Right ventricle myocardium superior (tissue), 1 donor: ENCODE measurements at regions of chr11 and their contacts with region 1.

Region 1: GRCh38 chr11:45964911-45965389 is 42.5 kb downstream of the LARGE2 start:
- DNase-seq: no peak
- ATAC-seq: peak; percentile 88

Region 2: DNA sequence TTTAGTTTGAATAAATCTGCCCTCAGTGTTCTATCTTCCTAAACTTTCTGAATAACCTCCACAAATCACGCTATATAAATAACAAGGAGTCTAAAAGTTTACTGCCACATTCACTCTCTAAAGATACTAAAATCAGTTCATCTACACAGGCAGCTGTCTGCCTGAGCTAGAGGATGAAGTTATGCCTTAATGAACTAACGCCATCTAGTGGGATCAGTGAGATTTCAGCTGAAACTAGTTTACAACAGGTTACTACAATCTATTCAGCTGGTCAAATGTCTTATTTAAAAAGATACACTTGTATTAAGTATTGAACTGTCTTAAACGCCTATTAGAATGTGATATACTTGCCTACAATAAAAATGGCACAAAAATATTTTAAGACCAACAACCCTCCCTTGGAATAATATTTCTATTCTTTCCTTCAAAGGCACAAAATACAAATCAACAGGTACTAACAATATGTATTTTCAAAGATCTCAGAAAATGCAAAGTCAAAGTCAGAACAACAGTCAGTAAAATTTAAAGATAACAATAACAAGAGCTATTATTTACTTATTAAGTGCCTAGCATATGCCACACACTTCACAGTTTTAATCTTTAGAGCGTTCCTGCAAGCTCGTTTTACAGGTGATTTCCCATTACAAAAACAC is 41.6 kb after region 1 on chr11:
- intact Hi-C with region 1: loop called (anchors 2 kb)
- DNase-seq: no peak
- ATAC-seq: peak; percentile 89

Region 3: DNA sequence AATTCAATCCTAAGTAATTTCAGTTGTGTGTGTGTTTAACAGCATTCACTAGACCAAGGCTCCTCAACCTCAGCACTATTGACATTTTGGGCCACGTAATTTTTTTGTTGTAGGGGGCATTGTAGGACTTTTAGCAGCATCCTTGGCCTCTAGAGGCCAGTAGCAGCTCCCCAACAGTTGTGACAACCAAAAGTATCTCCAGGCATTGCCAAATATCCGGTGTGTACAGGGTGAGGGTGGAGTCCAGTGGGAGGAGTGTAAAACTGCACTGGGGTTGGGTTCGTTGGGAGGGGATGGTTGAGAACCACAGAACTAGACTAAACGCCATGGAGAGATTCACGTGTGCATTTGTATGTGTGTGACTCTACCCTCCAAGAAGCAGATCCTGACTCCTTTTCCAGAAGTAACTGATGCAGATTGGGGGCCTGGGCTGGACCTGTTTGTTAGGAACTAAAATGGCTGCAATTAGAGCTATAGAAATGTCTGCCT is 162.2 kb after region 1 on chr11:
- intact Hi-C with region 1: no loop called
- DNase-seq: no peak
- ATAC-seq: peak; percentile 81

Region 4: DNA sequence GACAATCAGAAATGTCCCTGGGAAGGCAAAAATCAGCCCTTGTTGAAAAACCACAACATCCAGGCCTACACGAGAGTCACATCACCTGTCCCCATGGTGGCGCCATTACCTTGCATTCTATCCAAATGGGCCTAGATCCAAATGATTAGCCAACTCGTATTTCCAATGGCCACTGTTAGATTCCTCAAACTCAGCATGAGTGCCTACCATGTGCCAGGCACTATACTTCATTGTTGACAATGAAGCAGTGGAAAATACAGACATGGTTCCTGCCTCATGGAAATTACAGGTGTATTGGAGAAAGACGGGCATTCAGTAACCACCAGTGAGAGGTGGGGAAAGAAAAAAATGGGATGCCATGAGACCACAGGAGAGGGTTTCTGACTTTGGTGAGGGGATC is 282.7 kb after region 1 on chr11:
- intact Hi-C with region 1: no loop called
- DNase-seq: no peak
- ATAC-seq: no peak

Region 5: GRCh38 chr11:46315033-46315738 is 350.2 kb after region 1 on chr11:
- intact Hi-C with region 1: loop called (anchors 10 kb)
- DNase-seq: peak; percentile 63
- ATAC-seq: peak; percentile 37